B cell (primary cell): ENCODE measurements at regions of chr1 and their contacts with region 1.

Region 1: GRCh38 chr1:174005032-174005431 is 17.1 kb downstream of the RC3H1 start:
- DNase-seq: peak; percentile 26
- ATAC-seq: peak; percentile 61
- H3K4me3 ChIP-seq: no peak overlapping the region
- H3K4me3 Mint-ChIP-seq: no peak overlapping the region
- H3K27ac ChIP-seq: no peak overlapping the region
- H3K27ac Mint-ChIP-seq: no peak overlapping the region
- H3K4me1 ChIP-seq: peaks cover 23 to 29% of the 10 kb centered on the region in 2 donors
- H3K4me1 Mint-ChIP-seq: peaks cover 62% of the 10 kb centered on the region
- H3K27me3 ChIP-seq: no peaks in the 10 kb centered on the region
- H3K27me3 Mint-ChIP-seq: no peaks in the 10 kb centered on the region
- CTCF ChIP-seq: no peak

Region 2: DNA sequence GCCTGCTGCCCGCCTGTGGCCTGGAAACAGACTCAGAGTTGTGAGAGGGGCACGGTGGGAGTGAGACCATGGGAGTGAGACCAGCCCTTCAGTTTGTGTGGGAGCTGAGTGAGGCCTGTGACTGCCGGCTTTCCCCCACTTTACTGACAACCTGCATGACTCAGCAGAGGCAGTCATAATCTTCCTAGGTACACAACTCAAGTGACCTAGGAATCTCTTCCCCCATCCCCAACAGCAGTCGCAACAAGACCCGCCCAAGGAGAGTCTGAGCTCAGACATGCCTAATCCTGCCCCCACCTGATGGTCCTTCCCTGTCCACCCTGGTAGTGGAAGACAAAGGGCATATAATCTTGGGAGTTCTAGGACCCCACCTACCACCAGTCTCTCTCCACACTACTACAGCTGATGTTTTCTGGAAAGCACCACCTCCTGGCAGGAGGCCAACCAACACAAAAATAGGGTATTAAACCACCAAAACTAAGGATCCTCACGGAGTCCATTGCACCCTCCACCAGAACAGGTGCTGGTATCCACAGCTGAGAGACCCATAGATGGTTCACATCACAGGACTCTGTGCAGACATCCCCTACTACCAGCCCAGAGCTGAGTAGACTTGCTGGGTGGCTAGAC is 245.9 kb before region 1 on chr1:
- CTCF ChIA-PET with region 1: no interaction called
- POLR2A ChIA-PET with region 1: no interaction called
- intact Hi-C with region 1: no loop called
- DNase-seq: no peak
- ATAC-seq: no peak
- H3K4me3 ChIP-seq: no peak overlapping the region
- H3K4me3 Mint-ChIP-seq: no peak overlapping the region
- H3K27ac ChIP-seq: no peak overlapping the region
- H3K27ac Mint-ChIP-seq: no peak overlapping the region
- H3K4me1 ChIP-seq: no peaks in the 10 kb centered on the region
- H3K4me1 Mint-ChIP-seq: no peaks in the 10 kb centered on the region
- H3K27me3 ChIP-seq: no peaks in the 10 kb centered on the region
- H3K27me3 Mint-ChIP-seq: no peaks in the 10 kb centered on the region
- CTCF ChIP-seq: no peak

Region 3: GRCh38 chr1:173954179-173954578 is 50.9 kb before region 1 on chr1:
- CTCF ChIA-PET with region 1: no interaction called
- POLR2A ChIA-PET with region 1: no interaction called
- intact Hi-C with region 1: no loop called
- DNase-seq: no peak
- ATAC-seq: no peak
- H3K4me3 ChIP-seq: no peak overlapping the region
- H3K4me3 Mint-ChIP-seq: no peak overlapping the region
- H3K27ac ChIP-seq: no peak overlapping the region
- H3K27ac Mint-ChIP-seq: no peak overlapping the region
- H3K4me1 ChIP-seq: no peaks in the 10 kb centered on the region
- H3K4me1 Mint-ChIP-seq: no peaks in the 10 kb centered on the region
- H3K27me3 ChIP-seq: no peaks in the 10 kb centered on the region
- H3K27me3 Mint-ChIP-seq: no peaks in the 10 kb centered on the region
- CTCF ChIP-seq: no peak

Region 4: GRCh38 chr1:174022080-174022975 is 17.3 kb after region 1 on chr1 and contains the start of gene RC3H1:
- CTCF ChIA-PET with region 1: no interaction called
- POLR2A ChIA-PET with region 1: interaction called, 5 read pairs
- intact Hi-C with region 1: loop called (anchors 2 kb)
- DNase-seq: peak; percentile 93
- ATAC-seq: peak; percentile 95
- H3K4me3 ChIP-seq: peak within 1 kb of the TSS; percentile 73 to 94 (median 91)
- H3K4me3 Mint-ChIP-seq: peak within 1 kb of the TSS; percentile 95
- H3K27ac ChIP-seq: peak within 1 kb of the TSS; percentile 76 to 93
- H3K27ac Mint-ChIP-seq: peak within 1 kb of the TSS; percentile 96
- H3K4me1 ChIP-seq: peaks cover 30 to 36% of the 10 kb centered on the region in 2 donors
- H3K4me1 Mint-ChIP-seq: peaks cover 41% of the 10 kb centered on the region
- H3K27me3 ChIP-seq: no peaks in the 10 kb centered on the region
- H3K27me3 Mint-ChIP-seq: no peaks in the 10 kb centered on the region
- CTCF ChIP-seq: no peak
- total RNA-seq, gene RC3H1: 84.4 and 84.5 TPM in 2 replicates

Region 5: DNA sequence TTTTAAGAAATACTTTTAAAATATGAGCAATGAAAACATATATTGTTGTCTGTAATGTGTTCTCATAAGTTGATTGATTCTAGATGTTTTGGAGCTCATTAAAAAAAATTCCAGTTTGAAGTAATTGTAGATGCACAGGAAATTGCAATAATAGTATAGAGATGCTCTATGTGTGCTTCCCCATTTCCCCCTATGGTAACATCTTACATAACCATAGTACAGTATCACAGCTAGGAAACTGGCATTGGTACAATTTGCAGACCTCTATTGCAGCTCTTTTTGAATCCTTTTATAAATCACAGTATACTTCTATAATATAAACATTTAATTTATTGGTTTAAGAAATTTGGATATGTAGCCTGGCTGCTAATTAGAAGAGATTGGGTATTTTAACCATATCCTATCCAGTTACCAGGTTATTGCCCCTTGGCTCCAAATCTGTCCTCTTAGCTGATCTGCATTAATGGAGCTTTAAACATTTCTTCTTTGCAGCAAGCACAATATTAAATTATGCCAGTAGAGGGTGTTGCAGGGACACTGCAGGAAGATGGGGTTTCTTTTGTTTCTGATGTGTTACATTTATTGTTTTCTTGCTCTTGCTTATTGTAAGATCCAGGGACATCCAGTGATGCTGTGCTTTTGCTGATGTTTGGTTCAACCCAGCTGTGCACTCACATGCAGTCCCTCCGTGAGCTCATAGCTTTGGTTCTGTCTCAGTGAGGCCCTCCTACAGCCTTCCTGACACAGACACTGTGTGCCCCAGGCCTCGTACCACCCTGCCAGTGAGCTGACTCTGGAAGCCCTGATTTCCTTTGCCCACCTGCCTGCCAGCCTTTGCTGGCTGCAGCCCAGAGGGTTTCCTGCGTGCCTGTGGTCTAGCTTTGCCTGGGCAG is 257.6 kb after region 1 on chr1:
- CTCF ChIA-PET with region 1: no interaction called
- POLR2A ChIA-PET with region 1: no interaction called
- intact Hi-C with region 1: no loop called
- DNase-seq: peak; percentile 58
- ATAC-seq: peak; percentile 62
- H3K4me3 ChIP-seq: no peak overlapping the region
- H3K4me3 Mint-ChIP-seq: no peak overlapping the region
- H3K27ac ChIP-seq: no peak overlapping the region
- H3K27ac Mint-ChIP-seq: peak overlapping the region; percentile 67
- H3K4me1 ChIP-seq: peaks cover 4 to 9% of the 10 kb centered on the region in 2 donors
- H3K4me1 Mint-ChIP-seq: peaks cover 20% of the 10 kb centered on the region
- H3K27me3 ChIP-seq: no peaks in the 10 kb centered on the region
- H3K27me3 Mint-ChIP-seq: no peaks in the 10 kb centered on the region
- CTCF ChIP-seq: peak; percentile 81

Region 6: GRCh38 chr1:174297351-174297750 is 292.3 kb after region 1 on chr1:
- CTCF ChIA-PET with region 1: no interaction called
- POLR2A ChIA-PET with region 1: no interaction called
- intact Hi-C with region 1: no loop called
- DNase-seq: no peak
- ATAC-seq: no peak
- H3K4me3 ChIP-seq: no peak overlapping the region
- H3K4me3 Mint-ChIP-seq: no peak overlapping the region
- H3K27ac ChIP-seq: no peak overlapping the region
- H3K27ac Mint-ChIP-seq: no peak overlapping the region
- H3K4me1 ChIP-seq: no peaks in the 10 kb centered on the region
- H3K4me1 Mint-ChIP-seq: peaks cover 5% of the 10 kb centered on the region
- H3K27me3 ChIP-seq: no peaks in the 10 kb centered on the region
- H3K27me3 Mint-ChIP-seq: no peaks in the 10 kb centered on the region
- CTCF ChIP-seq: no peak